Activated naive CD4-positive, alpha-beta T cell treated with anti-CD3 and anti-CD28 coated beads for 36 hours (primary cell): ENCODE measurements at regions of chr12 and their contacts with region 1.

Region 1: GRCh38 chr12:7678738-7679137 is 13.0 kb upstream of the APOBEC1 start:
- DNase-seq: no peak
- H3K4me3 Mint-ChIP-seq: no peak overlapping the region
- H3K27ac Mint-ChIP-seq: no peak overlapping the region
- H3K4me1 Mint-ChIP-seq: peaks cover 5% of the 10 kb centered on the region
- H3K27me3 Mint-ChIP-seq: no peaks in the 10 kb centered on the region

Region 2: GRCh38 chr12:7667125-7667524 is 11.6 kb before region 1 on chr12:
- CTCF ChIA-PET with region 1: interaction called, 10 read pairs
- intact Hi-C with region 1: no loop called
- DNase-seq: no peak
- H3K4me3 Mint-ChIP-seq: no peak overlapping the region
- H3K27ac Mint-ChIP-seq: no peak overlapping the region
- H3K4me1 Mint-ChIP-seq: no peaks in the 10 kb centered on the region
- H3K27me3 Mint-ChIP-seq: no peaks in the 10 kb centered on the region

Region 3: GRCh38 chr12:7758758-7759140 is 80.0 kb after region 1 on chr12:
- CTCF ChIA-PET with region 1: no interaction called
- intact Hi-C with region 1: no loop called
- DNase-seq: no peak
- H3K4me3 Mint-ChIP-seq: no peak overlapping the region
- H3K27ac Mint-ChIP-seq: no peak overlapping the region
- H3K4me1 Mint-ChIP-seq: peaks cover 3% of the 10 kb centered on the region
- H3K27me3 Mint-ChIP-seq: no peaks in the 10 kb centered on the region

Region 4: GRCh38 chr12:7995266-7995963 is 316.7 kb after region 1 on chr12:
- CTCF ChIA-PET with region 1: no interaction called
- intact Hi-C with region 1: loop called (anchors 2 kb)
- DNase-seq: peak; percentile 95
- H3K4me3 Mint-ChIP-seq: no peak overlapping the region
- H3K27ac Mint-ChIP-seq: no peak overlapping the region
- H3K4me1 Mint-ChIP-seq: peaks cover 13% of the 10 kb centered on the region
- H3K27me3 Mint-ChIP-seq: no peaks in the 10 kb centered on the region